ENCODE measurements at regions of chr22 and their contacts with region 1.

Region 1: GRCh38 chr22:39349506-39349966 is 255 bp upstream of the SYNGR1 start:
- DNase-seq: peak in 1 of 2 experiments; percentile 70
- H3K4me3 ChIP-seq: peak overlapping the region; percentile 70 to 93 (median 74)
- H3K27ac ChIP-seq: no peak overlapping the region
- H3K4me1 ChIP-seq: peaks cover 5 to 29% (median 19%) of the 10 kb centered on the region in 4 experiments
- H3K27me3 ChIP-seq: peaks cover 0 to 4% (median 4%) of the 10 kb centered on the region in 4 experiments; a peak in 2 of 7 replicates
- CTCF ChIP-seq: peak in 1 of 3 experiments; percentile 9; a peak in 1 of 4 replicates
- EP300 ChIP-seq: no peak
- POLR2A ChIP-seq: no peak
- RAD21 ChIP-seq: no peak

Region 2: DNA sequence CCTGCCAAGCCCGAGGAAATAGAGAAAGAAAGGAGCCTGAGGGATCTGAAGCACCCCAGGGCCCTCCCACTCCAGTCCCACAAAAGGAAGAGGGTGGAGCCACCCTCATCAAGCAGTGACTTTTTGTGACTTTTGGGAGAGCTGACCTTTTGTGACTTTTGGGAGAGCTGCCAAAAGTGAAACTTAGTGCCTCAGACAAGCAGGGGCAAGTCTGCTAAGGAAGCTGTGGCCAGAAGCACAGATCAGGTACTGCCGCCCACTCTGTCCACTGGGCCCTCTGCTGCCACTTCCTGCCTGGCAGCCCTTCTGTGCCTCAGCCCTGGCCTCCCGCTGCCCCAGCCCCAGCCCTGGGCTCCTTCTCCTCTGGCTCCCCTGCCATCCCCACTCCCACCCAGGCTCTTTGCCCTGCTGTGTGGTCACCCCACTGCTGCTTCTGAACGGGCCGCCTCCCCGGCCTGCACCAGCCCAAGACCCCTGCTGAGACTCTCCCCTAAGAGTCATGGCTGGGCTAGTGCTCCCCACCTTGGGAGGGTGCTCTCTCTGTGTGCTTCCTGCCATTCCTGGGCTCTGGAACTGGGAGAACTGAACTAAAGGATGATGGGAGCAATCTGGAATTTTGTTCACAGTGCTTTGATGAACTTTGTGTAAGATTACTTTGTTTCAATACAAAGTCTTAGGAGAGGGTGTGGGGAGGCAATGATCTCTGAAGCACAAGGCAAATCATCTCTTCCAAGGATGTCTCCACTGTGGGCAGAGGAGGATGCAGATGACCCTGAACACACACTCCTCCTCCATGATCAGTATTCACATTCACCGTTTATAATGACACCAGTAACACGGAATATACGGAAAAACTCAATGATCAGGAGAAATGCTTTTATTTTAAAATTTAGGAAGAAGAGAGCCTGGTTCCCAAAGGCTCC is 252.2 kb before region 1 on chr22 and contains the start of gene APOBEC3H:
- CTCF ChIA-PET with region 1: no interaction called
- POLR2A ChIA-PET with region 1: no interaction called
- DNase-seq: no peak
- H3K4me3 ChIP-seq: no peak within 1 kb of the TSS
- H3K27ac ChIP-seq: peak within 1 kb of the TSS; percentile 39; the same call in 1 of the 2 replicates
- H3K4me1 ChIP-seq: peaks cover 0 to 24% (median 9%) of the 10 kb centered on the region in 4 experiments; a peak in 6 of 7 replicates
- H3K27me3 ChIP-seq: no peaks in the 10 kb centered on the region
- CTCF ChIP-seq: no peak
- EP300 ChIP-seq: no peak
- POLR2A ChIP-seq: no peak
- RAD21 ChIP-seq: no peak
- total RNA-seq, gene APOBEC3H: 0.47 and 0.48 TPM in 2 replicates

Region 3: DNA sequence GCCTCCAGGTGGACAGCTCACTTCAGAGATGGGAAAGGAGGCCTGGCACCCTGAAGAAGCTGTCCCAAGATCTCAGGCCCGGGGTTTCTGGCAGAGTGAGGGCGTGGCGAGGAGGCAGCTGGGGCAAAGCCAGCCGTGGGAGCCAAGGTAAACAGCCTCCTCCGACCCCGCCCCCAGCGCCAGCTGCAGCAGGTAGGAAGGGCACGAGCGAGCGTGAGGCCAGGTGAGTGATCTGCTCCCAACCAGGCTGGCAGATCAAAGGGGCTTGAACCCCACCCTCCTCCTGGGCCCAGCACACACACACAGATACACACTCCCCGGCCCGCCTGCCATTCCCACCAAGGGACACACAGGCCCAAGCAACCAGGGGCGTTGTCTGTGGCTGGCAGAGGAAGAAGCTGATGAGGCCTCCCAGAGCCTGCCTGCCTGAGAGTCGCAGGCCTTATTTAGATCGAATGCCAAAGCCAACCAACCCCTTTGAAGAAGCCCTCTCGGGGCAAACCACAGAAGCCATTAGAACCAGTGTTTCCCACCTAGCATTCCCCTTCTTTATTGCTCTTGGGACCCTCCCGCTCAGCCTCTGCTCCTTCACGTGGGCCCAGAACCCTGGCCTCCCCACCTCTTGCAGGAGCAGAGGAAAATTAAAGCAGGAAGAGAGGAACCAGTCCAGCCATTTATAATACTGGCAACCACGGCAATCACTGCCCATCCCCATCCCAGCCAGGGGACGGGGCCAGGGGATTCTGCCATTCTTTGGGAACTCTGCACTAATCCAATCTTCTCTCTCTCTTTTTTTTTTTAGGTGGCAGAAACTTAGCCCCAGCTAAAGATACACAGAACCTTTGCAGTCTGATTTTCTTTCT is 109.7 kb before region 1 on chr22:
- CTCF ChIA-PET with region 1: no interaction called
- POLR2A ChIA-PET with region 1: no interaction called
- DNase-seq: no peak
- H3K4me3 ChIP-seq: no peak overlapping the region
- H3K27ac ChIP-seq: no peak overlapping the region
- H3K4me1 ChIP-seq: peaks cover 0 to 26% (median 22%) of the 10 kb centered on the region in 4 experiments; a peak in 6 of 7 replicates
- H3K27me3 ChIP-seq: peaks cover 13 to 50% (median 38%) of the 10 kb centered on the region in 4 experiments; a peak in 6 of 7 replicates
- CTCF ChIP-seq: no peak
- EP300 ChIP-seq: no peak
- POLR2A ChIP-seq: no peak
- RAD21 ChIP-seq: no peak

Region 4: GRCh38 chr22:39332441-39333064 is 17.0 kb before region 1 on chr22:
- CTCF ChIA-PET with region 1: interaction called, 110 read pairs
- POLR2A ChIA-PET with region 1: interaction called, 5 read pairs
- DNase-seq: no peak
- H3K4me3 ChIP-seq: no peak overlapping the region
- H3K27ac ChIP-seq: no peak overlapping the region
- H3K4me1 ChIP-seq: no peaks in the 10 kb centered on the region
- H3K27me3 ChIP-seq: no peaks in the 10 kb centered on the region
- CTCF ChIP-seq: no peak
- EP300 ChIP-seq: no peak
- POLR2A ChIP-seq: no peak
- RAD21 ChIP-seq: no peak

Region 5: GRCh38 chr22:39364714-39365491 is 15.4 kb after region 1 on chr22:
- CTCF ChIA-PET with region 1: interaction called, 5 read pairs
- POLR2A ChIA-PET with region 1: interaction called, 16 read pairs
- DNase-seq: no peak
- H3K4me3 ChIP-seq: no peak overlapping the region
- H3K27ac ChIP-seq: no peak overlapping the region
- H3K4me1 ChIP-seq: peaks cover 4 to 40% (median 25%) of the 10 kb centered on the region in 4 experiments
- H3K27me3 ChIP-seq: 0 out of 7 replicates have a peak, but pooled peaks cover 0 to 2% (median 0%) of the 10 kb centered on the region in 4 experiments
- CTCF ChIP-seq: no peak
- EP300 ChIP-seq: no peak
- POLR2A ChIP-seq: no peak
- RAD21 ChIP-seq: no peak

Measured in H1 (cell line).